ENCODE measurements at regions of chr2 and their contacts with region 1.

Region 1: GRCh38 chr2:173090276-173090877 is 14.7 kb downstream of the MAP3K20 start:
- DNase-seq: peak; percentile 27 to 51
- ATAC-seq: peak; percentile 67 to 81 (median 80)
- H3K4me3 ChIP-seq: peak overlapping the region; percentile 62
- H3K27ac ChIP-seq: peak overlapping the region; percentile 88
- H3K4me1 ChIP-seq: peaks cover 57% of the 10 kb centered on the region
- H3K27me3 ChIP-seq: no peaks in the 10 kb centered on the region
- CTCF ChIP-seq: no peak

Region 2: DNA sequence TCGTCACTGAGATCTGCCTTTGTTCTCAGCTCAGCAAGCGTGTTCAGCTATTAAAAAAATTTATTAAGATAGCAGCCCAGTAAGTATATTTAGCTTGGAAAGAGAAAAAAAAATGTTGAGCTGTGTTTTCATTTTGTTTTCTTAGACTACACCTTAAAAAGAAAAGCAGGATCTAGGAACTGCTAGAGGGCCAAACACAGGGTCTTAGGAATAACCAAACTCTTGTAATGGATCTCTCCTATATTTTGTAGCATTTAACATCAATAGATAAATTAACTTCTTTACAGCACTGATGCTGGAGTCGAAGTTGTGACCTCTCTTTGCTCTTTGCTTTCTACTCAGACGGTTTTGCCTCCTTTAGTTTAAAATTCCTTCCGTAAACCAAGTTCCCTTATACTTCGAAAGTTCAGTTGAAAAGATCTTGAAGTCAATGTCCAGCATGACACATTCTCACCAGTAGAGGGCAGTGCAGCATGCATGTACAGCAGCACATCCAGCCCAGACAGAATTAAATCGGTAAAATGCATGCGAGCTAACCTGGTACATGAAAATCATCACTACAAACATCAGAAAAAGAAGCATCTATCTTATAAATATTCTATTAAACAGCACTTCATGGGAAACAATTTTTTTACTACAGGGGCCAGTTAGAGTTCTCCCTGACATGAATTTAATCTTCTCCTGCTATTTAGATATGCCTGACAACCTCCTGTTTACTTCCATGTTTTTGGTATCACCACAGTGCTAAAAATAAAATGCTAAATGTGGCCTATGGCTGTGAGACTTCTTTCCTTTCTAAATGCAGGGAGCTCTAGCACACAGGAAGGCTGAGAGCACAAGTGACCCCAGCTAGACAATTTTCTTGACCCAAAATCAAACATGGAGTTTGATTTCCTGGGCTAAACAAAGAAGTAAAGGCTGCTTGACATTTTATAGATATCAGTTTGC is 62.9 kb before region 1 on chr2:
- intact Hi-C with region 1: loop called (anchors 2 kb)
- DNase-seq: peak; percentile 65 to 81
- ATAC-seq: peak; percentile 66 to 76 (median 71)
- H3K4me3 ChIP-seq: peak overlapping the region; percentile 27
- H3K27ac ChIP-seq: peak overlapping the region; percentile 92
- H3K4me1 ChIP-seq: peaks cover 50% of the 10 kb centered on the region
- H3K27me3 ChIP-seq: no peaks in the 10 kb centered on the region
- CTCF ChIP-seq: peak; percentile 97

Region 3: GRCh38 chr2:173033084-173033483 is 57.3 kb before region 1 on chr2:
- intact Hi-C with region 1: loop called (anchors 2 kb)
- DNase-seq: no peak
- ATAC-seq: no peak
- H3K4me3 ChIP-seq: no peak overlapping the region
- H3K27ac ChIP-seq: peak overlapping the region; percentile 92
- H3K4me1 ChIP-seq: peaks cover 70% of the 10 kb centered on the region
- H3K27me3 ChIP-seq: no peaks in the 10 kb centered on the region
- CTCF ChIP-seq: no peak

Region 4: DNA sequence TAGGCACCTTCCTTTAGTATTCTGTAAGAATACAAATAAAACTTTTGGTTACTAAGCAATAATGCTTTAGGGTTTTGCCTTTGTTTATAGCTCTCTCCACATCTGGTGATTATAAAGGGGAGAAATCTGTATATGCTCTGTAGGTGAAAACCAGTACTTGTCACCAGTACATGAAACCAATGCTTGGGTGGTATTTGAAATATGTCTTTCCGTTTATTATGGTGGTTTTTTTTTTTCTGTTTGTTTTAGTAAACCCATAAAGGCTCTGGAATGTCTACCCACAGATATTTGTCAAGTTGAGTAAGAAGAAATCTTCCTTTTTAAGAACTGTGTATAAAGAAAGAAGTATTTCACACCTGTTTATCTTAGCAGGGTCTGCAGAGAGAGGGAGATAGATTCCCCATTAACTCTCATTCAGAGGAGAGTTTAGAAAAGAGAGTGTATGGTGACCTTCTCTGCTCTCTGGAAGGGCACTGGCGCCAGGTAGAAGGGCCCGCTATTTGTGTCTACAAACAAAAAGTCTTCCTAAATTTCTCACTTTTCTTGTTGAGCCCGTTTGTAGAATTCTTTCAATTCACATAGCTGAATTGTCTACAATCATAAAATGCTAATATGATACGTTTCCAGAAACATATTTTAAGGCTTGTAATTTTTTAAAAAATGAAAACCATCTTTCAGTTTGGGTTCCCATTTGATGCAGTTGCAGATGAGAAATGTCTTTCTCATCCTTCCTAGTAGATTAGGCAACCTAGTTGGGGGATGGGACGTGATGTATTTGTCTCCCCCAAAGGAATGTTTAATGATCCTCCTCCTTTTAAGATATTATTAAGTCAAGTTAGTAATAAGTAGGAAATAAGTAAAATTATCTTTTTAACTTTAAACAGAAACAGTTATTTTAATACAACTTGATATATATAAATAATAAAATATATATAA is 19.1 kb after region 1 on chr2:
- intact Hi-C with region 1: no loop called
- DNase-seq: no peak
- ATAC-seq: no peak
- H3K4me3 ChIP-seq: no peak overlapping the region
- H3K27ac ChIP-seq: peak overlapping the region; percentile 72
- H3K4me1 ChIP-seq: peaks cover 67% of the 10 kb centered on the region
- H3K27me3 ChIP-seq: no peaks in the 10 kb centered on the region
- CTCF ChIP-seq: no peak

Region 5: GRCh38 chr2:173151671-173152398 is 61.5 kb after region 1 on chr2:
- intact Hi-C with region 1: loop called in 1 of 2 experiments (anchors 5 kb)
- DNase-seq: no peak
- ATAC-seq: peak in 1 of 4 donors; percentile 27
- H3K4me3 ChIP-seq: no peak overlapping the region
- H3K27ac ChIP-seq: peak overlapping the region; percentile 87
- H3K4me1 ChIP-seq: peaks cover 68% of the 10 kb centered on the region
- H3K27me3 ChIP-seq: no peaks in the 10 kb centered on the region
- CTCF ChIP-seq: no peak

Region 6: GRCh38 chr2:173210270-173211196 is 120.2 kb after region 1 on chr2:
- intact Hi-C with region 1: loop called in 1 of 2 experiments (anchors 5 kb)
- DNase-seq: peak; percentile 39 to 72
- ATAC-seq: peak; percentile 83 to 91 (median 88)
- H3K4me3 ChIP-seq: peak overlapping the region; percentile 37
- H3K27ac ChIP-seq: peak overlapping the region; percentile 86
- H3K4me1 ChIP-seq: peaks cover 64% of the 10 kb centered on the region
- H3K27me3 ChIP-seq: no peaks in the 10 kb centered on the region
- CTCF ChIP-seq: peak; percentile 85

Measured in psoas muscle (tissue), 8 donors.